Sciatic nerve (tissue), 2 donors: ENCODE measurements at regions of chr1 and their contacts with region 1.

Region 1: DNA sequence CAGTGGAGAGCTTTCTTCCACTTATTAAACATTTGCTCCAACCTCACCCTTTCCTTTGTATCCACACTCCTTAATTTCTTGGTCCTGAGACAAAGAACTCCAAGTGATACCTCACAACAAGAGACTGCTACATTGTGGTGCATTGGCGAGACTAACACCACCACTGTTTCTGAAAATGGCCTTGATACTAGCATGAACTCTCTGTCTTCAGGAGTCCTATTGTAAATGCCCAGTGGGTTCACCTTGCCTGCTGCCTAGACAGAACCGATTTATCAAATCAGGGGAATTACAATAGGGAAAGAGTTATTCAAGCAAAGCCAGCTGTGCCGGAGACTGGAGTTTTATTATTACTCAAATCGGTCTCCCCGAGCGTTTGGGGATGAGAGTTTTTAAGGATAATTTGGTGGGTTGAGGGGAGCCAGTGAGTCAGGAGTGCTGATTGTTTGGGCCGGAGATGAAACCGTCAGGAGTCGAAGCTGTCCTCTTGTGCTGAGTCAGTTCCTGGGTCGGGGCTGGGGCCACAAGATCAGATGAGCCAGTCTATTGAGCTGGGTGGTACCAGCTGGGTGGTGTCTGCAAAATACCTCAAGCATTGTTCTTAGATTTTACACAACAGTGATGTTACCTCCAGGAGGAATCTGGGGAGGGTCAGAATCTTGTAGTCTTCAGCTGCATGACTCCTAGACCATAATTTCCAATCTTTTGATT is 83.1 kb downstream of the DESI2 start:
- DNase-seq: no peak
- ATAC-seq: no peak

Region 2: DNA sequence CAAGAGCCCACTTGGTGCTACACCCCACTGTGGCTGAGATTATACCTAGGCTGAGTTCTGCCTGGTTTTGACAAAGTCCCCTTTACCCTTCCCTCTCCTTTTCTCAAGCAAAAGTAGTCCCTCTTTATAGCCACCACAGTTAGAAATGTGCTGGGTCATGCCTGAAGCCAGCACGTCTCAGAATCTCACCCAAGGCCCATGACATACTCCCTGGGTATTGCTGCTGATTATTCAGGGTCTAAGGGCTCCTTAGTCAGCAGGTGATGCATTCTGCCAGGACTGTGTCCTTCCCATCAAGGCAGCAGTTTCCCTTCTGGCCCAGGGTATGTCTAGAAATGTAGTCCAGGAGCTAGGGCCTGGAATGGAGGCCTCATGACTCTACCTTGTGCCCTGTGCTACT is 32.2 kb after region 1 on chr1:
- intact Hi-C with region 1: loop called (anchors 2 kb)
- DNase-seq: peak; percentile 2
- ATAC-seq: no peak